ENCODE measurements at regions of chr1 and their contacts with region 1.

Region 1: DNA sequence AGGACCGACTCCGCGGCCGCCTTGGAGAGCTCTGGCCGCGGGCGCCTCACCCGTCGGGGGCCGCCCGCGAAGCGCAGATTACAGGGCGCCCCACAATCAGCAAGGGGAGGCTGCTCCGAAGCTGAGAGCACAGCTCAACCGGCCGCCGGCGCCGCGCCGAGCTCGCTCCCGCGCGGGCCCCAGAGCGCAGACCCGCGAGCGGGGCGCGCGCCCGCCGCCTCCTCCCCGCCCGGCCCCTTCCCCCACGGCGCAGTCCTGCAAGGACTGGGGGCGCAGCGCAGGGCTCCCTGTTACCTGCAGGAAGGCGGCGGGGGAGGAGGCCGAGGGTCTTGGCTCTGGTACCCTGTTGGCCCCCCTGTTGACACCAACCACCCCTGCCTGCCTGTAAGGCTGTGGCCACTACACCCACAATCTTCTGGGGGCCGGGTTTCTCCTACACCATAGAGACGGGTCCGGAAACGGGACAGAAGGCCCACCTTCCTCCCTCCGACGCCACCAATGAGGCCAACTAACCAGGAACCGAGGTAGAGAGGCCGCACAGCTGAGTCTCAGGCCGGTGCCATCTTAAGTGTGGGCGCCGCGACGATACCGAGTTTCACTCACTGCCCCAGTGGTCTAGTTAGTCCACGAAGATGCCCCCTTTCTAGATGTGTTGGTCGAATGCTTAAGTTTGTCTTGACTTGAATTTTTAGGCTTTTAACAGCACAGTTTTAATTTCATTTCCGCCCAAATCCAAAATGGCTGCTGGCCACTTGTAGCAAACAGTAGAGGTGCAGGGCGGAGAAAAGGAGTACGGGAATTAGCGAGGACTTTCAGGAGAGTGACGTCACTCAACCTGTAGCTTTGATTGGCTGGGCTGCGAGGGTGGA is at the start of gene SCYL3:
- DNase-seq: peak; percentile 92
- ATAC-seq: peak; percentile 87
- H3K4me3 Mint-ChIP-seq: peak within 1 kb of the TSS; percentile 80
- H3K27ac Mint-ChIP-seq: peak within 1 kb of the TSS; percentile 99
- H3K4me1 Mint-ChIP-seq: peaks cover 44% of the 10 kb centered on the region
- H3K27me3 Mint-ChIP-seq: no peaks in the 10 kb centered on the region
- total RNA-seq, gene SCYL3: 11.0 to 12.0 TPM

Region 2: DNA sequence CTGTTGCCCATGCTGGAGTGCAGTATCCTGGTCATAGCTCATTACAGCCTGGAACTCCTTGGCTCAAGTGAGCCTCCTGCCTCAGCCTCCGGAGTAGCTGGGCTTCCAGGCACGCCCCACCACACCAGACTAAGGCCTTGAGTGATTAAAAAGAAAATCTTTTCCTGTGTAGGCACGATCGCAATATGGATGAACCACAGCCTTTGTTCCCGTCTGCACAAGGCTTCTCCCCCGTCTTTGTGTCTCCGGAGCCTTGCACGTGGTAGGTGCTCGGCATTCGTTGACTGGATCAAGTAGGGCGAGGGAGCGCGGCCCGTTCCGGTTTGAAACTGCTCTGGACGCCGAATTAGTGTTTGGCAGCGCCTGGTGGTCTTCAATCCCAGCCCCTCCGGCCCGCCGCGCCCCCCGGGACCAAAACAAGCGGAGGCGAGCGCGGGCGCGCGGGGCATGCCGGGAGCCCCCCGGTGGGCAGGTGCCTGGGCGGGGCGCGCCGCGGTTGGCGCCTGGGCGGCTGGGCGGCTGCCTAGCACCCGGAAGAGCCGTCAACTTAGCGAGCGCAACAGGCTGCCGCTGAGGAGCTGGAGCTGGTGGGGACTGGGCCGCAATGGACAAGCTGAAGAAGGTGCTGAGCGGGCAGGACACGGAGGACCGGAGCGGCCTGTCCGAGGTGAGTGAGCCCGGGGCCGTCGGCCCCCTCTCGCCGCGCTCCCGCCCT is 1668.1 kb before region 1 on chr1 and contains the start of gene SFT2D2:
- CTCF ChIA-PET with region 1: no interaction called
- POLR2A ChIA-PET with region 1: no interaction called
- intact Hi-C with region 1: loop called in 1 of 2 experiments (anchors 2 kb)
- DNase-seq: peak; percentile 88
- ATAC-seq: peak; percentile 90
- H3K4me3 Mint-ChIP-seq: peak within 1 kb of the TSS; percentile 86
- H3K27ac Mint-ChIP-seq: peak within 1 kb of the TSS; percentile 86
- H3K4me1 Mint-ChIP-seq: peaks cover 49% of the 10 kb centered on the region
- H3K27me3 Mint-ChIP-seq: peaks cover 3% of the 10 kb centered on the region
- total RNA-seq, gene SFT2D2: 25.2 to 42.3 TPM

Region 3: GRCh38 chr1:169586395-169587255 is 307.1 kb before region 1 on chr1 and contains the start of gene F5:
- CTCF ChIA-PET with region 1: no interaction called
- POLR2A ChIA-PET with region 1: no interaction called
- intact Hi-C with region 1: loop called (anchors 2 to 5 kb)
- DNase-seq: peak; percentile 92
- ATAC-seq: peak; percentile 87
- H3K4me3 Mint-ChIP-seq: peak within 1 kb of the TSS; percentile 95
- H3K27ac Mint-ChIP-seq: peak within 1 kb of the TSS; percentile 97
- H3K4me1 Mint-ChIP-seq: peaks cover 65% of the 10 kb centered on the region
- H3K27me3 Mint-ChIP-seq: no peaks in the 10 kb centered on the region
- total RNA-seq, gene F5: 49.8 to 57.8 TPM

Region 4: DNA sequence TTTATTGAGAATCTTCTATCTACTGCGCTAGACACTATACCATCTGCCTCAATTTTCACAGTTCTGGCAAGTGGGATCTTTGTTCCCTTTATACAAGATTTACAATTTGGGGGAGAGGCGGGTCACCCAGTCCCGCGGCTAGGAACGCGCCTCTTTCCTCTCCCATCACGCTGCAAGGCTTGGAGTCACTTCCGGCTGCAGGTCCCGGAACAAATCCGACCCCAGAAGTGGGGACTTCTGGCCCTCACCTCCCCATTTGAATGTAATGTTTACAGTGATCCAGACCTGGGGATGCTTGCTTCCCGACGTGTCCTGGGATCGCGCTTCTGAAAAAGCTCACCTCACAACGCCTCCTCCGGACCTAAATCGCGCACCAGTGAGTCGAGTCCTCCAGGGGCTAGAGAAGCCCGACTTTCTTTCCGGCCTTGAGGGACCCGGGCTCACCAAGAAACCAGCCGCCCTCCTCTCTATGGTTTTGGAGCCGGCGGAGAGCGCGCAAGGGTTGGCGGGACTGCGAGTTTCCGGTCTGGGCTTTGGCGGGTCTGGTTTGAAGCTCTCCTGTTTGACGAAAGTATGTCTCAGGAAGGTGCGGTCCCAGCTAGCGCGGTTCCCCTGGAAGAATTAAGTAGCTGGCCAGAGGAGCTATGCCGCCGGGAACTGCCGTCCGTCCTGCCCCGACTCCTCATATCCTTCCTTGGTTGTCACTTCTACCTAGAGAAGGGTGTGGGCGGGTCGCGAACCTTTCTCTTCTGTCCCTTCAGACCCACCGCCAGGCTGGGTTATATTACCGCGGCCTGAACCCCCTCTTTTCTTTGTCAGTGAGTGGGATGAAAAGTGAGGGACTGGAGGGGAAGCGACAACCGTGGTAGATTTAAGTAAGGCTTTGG is 99.0 kb before region 1 on chr1 and contains the start of gene METTL18:
- CTCF ChIA-PET with region 1: interaction called, 4 read pairs
- POLR2A ChIA-PET with region 1: interaction called, 9 read pairs
- intact Hi-C with region 1: loop called (anchors 1 kb)
- DNase-seq: peak; percentile 96
- ATAC-seq: peak; percentile 98
- H3K4me3 Mint-ChIP-seq: peak within 1 kb of the TSS; percentile 96
- H3K27ac Mint-ChIP-seq: peak within 1 kb of the TSS; percentile 98
- H3K4me1 Mint-ChIP-seq: peaks cover 46% of the 10 kb centered on the region
- H3K27me3 Mint-ChIP-seq: no peaks in the 10 kb centered on the region
- total RNA-seq, gene METTL18: 11.6 to 13.3 TPM

Region 5: DNA sequence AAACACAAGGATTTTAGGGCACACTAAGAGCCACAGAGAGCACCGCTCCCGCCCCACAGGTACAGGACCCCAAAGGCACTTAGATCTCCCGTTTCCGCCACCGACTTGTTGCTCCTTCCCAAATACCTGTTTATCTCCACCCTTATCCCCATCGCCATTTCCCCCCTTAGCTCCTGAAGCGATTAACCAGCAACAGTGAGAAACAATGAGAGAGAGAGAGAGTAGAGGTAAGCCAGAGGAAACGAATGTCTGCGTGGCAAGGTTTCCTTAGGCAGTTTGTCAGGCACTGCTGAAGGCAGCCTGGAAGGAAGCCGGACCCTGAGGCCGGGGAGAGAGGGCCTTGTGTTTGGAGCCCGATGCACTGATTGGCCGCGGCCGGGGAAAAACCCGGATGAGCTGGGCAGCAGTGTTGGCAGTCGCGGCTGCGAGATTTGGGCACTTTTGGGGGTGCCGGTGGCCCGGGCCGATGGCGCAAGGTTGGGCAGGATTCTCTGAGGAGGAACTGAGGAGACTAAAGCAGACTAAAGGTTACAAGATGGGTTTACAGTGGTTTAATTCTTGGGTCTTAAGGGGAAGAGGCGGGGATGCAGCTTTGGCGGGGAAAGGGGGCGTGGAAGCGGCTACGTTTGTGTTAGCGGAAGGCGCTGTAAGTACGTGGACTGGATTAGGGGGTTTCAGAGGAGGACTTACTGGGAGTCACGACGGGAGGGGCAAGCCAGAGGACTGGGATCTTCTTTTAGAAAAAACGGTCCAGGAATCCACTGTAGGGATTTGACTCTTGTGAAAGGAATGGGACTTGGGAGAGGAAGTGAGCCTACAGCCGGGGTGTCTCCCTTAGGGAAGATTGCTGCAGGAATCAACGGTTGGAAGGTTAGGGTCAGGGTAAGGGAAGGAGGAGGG is 638.3 kb after region 1 on chr1 and contains the start of gene GORAB:
- CTCF ChIA-PET with region 1: no interaction called
- POLR2A ChIA-PET with region 1: no interaction called
- intact Hi-C with region 1: loop called (anchors 1 to 10 kb)
- DNase-seq: peak; percentile 94
- ATAC-seq: peak; percentile 98
- H3K4me3 Mint-ChIP-seq: no peak within 1 kb of the TSS
- H3K27ac Mint-ChIP-seq: no peak within 1 kb of the TSS
- H3K4me1 Mint-ChIP-seq: peaks cover 15% of the 10 kb centered on the region
- H3K27me3 Mint-ChIP-seq: no peaks in the 10 kb centered on the region
- total RNA-seq, gene GORAB: 9.8 to 13.5 TPM

Region 6: GRCh38 chr1:171741872-171742576 is 1848.3 kb after region 1 on chr1 and contains the start of gene VAMP4:
- CTCF ChIA-PET with region 1: no interaction called
- POLR2A ChIA-PET with region 1: no interaction called
- intact Hi-C with region 1: loop called in 1 of 2 experiments (anchors 2 kb)
- DNase-seq: peak; percentile 94
- ATAC-seq: peak; percentile 88
- H3K4me3 Mint-ChIP-seq: peak within 1 kb of the TSS; percentile 92
- H3K27ac Mint-ChIP-seq: peak within 1 kb of the TSS; percentile 99
- H3K4me1 Mint-ChIP-seq: peaks cover 41% of the 10 kb centered on the region
- H3K27me3 Mint-ChIP-seq: no peaks in the 10 kb centered on the region
- total RNA-seq, gene VAMP4: 9.7 to 11.6 TPM

Measured in activated CD4-positive, alpha-beta T cell treated with anti-CD3 and anti-CD28 coated beads for 36 hours (primary cell).